SK-N-SH (cell line): ENCODE measurements at regions of chr17 and their contacts with region 1.

Region 1: GRCh38 chr17:63587770-63588169 is 12.9 kb upstream of the TACO1 start:
- DNase-seq: no peak
- H3K4me3 ChIP-seq: no peak overlapping the region
- H3K27ac ChIP-seq: no peak overlapping the region
- H3K4me1 ChIP-seq: no peaks in the 10 kb centered on the region
- H3K27me3 ChIP-seq: no peaks in the 10 kb centered on the region
- CTCF ChIP-seq: no peak
- EP300 ChIP-seq: no peak
- RAD21 ChIP-seq: no peak

Region 2: GRCh38 chr17:63600569-63601438 is 13.0 kb after region 1 on chr17 and contains the start of gene TACO1:
- CTCF ChIA-PET with region 1: interaction called, 10 read pairs
- POLR2A ChIA-PET with region 1: interaction called, 3 read pairs
- DNase-seq: peak; percentile 96
- H3K4me3 ChIP-seq: peak within 1 kb of the TSS; percentile 73 to 80
- H3K27ac ChIP-seq: peak within 1 kb of the TSS; percentile 51 to 73
- H3K4me1 ChIP-seq: peaks cover 6 to 14% of the 10 kb centered on the region in 2 experiments; a peak in 2 of 4 replicates
- H3K27me3 ChIP-seq: no peaks in the 10 kb centered on the region
- CTCF ChIP-seq: no peak
- EP300 ChIP-seq: peak in 1 of 2 experiments; percentile 51; a peak in 1 of 4 replicates
- RAD21 ChIP-seq: peak; percentile 21; the same call in 1 of the 2 replicates
- polyA plus RNA-seq, gene TACO1: 32.7 and 37.9 TPM in 2 replicates

Region 3: GRCh38 chr17:63751806-63752205 is 164.0 kb after region 1 on chr17:
- CTCF ChIA-PET with region 1: no interaction called
- POLR2A ChIA-PET with region 1: no interaction called
- DNase-seq: no peak
- H3K4me3 ChIP-seq: no peak overlapping the region
- H3K27ac ChIP-seq: no peak overlapping the region
- H3K4me1 ChIP-seq: no peaks in the 10 kb centered on the region
- H3K27me3 ChIP-seq: no peaks in the 10 kb centered on the region
- CTCF ChIP-seq: no peak
- EP300 ChIP-seq: no peak
- RAD21 ChIP-seq: no peak

Region 4: GRCh38 chr17:64291254-64291851 is 703.6 kb after region 1 on chr17:
- CTCF ChIA-PET with region 1: no interaction called
- POLR2A ChIA-PET with region 1: no interaction called
- DNase-seq: no peak
- H3K4me3 ChIP-seq: no peak overlapping the region
- H3K27ac ChIP-seq: no peak overlapping the region
- H3K4me1 ChIP-seq: no peaks in the 10 kb centered on the region
- H3K27me3 ChIP-seq: no peaks in the 10 kb centered on the region
- CTCF ChIP-seq: peak; percentile 58
- EP300 ChIP-seq: no peak
- RAD21 ChIP-seq: peak; percentile 26